ENCODE measurements at regions of chr7 and their contacts with region 1.

Region 1: GRCh38 chr7:30974605-30975255 is 11.0 kb downstream of the GHRHR start:
- DNase-seq: peak; percentile 63
- H3K4me3 Mint-ChIP-seq: no peak overlapping the region
- H3K27ac Mint-ChIP-seq: no peak overlapping the region
- H3K4me1 Mint-ChIP-seq: peaks cover 7% of the 10 kb centered on the region
- H3K27me3 Mint-ChIP-seq: peaks cover 39% of the 10 kb centered on the region

Region 2: DNA sequence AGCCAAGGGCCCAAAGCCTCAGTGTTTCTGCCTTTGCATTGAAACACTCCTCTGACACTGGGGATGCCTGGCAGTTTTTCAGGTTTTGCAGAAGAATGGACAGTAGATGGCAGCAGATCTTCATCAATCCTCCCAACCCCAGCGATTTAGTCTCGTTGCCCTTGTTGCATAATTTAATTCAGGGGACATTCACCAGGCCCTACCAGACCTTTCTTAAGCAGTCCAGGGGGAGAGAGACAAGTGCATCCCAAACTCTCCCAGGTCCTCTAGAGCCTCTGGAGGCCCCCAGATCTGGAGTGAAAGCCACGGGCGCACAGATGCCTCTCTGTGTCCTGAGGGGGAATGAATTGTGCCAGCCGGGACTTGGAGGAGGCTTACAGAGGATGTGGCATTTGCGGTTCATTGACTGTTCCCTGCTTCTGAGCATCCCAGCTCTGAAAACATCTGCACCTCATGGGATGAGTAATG is 173.9 kb before region 1 on chr7:
- CTCF ChIA-PET with region 1: interaction called, 10 read pairs
- DNase-seq: peak; percentile 60
- H3K4me3 Mint-ChIP-seq: no peak overlapping the region
- H3K27ac Mint-ChIP-seq: no peak overlapping the region
- H3K4me1 Mint-ChIP-seq: peaks cover 24% of the 10 kb centered on the region
- H3K27me3 Mint-ChIP-seq: no peaks in the 10 kb centered on the region

Region 3: GRCh38 chr7:30928254-30928872 is 46.4 kb before region 1 on chr7:
- CTCF ChIA-PET with region 1: no interaction called
- DNase-seq: no peak
- H3K4me3 Mint-ChIP-seq: no peak overlapping the region
- H3K27ac Mint-ChIP-seq: no peak overlapping the region
- H3K4me1 Mint-ChIP-seq: no peaks in the 10 kb centered on the region
- H3K27me3 Mint-ChIP-seq: no peaks in the 10 kb centered on the region

Region 4: DNA sequence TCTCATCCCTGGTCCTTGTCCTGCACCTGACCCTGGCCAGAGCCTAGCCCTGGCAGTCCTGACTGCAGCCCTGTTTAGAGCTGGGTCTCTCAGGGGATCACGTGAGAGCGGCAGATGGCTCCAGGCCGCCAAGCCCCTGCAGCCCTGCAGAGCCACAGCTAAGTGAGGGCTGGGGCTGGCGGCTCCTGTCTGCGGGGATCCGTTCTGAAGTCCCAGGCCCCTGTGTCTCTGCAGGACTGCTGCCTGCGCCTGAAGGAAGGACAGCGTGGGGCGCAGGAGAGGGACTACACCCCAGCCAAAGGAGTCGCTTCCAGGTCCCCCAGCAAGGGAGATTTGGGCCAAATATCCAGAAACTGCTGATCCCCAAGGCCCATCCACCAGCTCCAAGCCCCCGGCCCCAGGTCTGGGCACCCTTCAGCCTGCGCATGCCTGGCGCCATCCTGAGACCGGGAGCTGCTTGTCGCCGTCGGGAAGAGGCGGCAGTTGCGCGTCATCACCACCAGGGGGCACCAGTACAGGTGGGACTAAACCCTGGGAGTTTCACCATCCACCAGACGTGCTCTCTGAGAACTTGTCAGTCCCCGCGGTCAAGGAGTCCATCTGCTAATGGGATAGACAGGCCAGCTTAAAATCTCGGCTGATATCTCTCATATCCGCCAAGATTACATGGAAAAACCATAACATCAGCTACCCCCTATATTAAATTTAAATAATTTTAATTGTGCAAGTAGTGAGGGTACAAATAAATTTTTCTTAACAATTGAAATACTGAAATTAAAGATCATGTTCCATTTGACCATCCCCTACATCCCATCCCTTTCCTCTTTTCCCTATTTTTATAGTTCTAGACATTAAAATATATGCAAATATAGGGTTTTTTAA is 36.1 kb before region 1 on chr7:
- CTCF ChIA-PET with region 1: interaction called, 72 read pairs
- DNase-seq: peak; percentile 74
- H3K4me3 Mint-ChIP-seq: no peak overlapping the region
- H3K27ac Mint-ChIP-seq: no peak overlapping the region
- H3K4me1 Mint-ChIP-seq: no peaks in the 10 kb centered on the region
- H3K27me3 Mint-ChIP-seq: peaks cover 36% of the 10 kb centered on the region

Region 5: GRCh38 chr7:31033674-31034300 is 59.1 kb after region 1 on chr7:
- CTCF ChIA-PET with region 1: no interaction called
- DNase-seq: no peak
- H3K4me3 Mint-ChIP-seq: no peak overlapping the region
- H3K27ac Mint-ChIP-seq: no peak overlapping the region
- H3K4me1 Mint-ChIP-seq: no peaks in the 10 kb centered on the region
- H3K27me3 Mint-ChIP-seq: peaks cover 54% of the 10 kb centered on the region

Region 6: GRCh38 chr7:31299336-31299735 is 324.6 kb after region 1 on chr7:
- CTCF ChIA-PET with region 1: no interaction called
- DNase-seq: no peak
- H3K4me3 Mint-ChIP-seq: no peak overlapping the region
- H3K27ac Mint-ChIP-seq: no peak overlapping the region
- H3K4me1 Mint-ChIP-seq: no peaks in the 10 kb centered on the region
- H3K27me3 Mint-ChIP-seq: no peaks in the 10 kb centered on the region

Measured in activated naive CD4-positive, alpha-beta T cell treated with anti-CD3 and anti-CD28 coated beads, Interleukin-2, amount 10 ng/mL, durations not matched to agents 7 days and 5 days (primary cell).